ENCODE measurements at regions of chr7 and their contacts with region 1.

Region 1: GRCh38 chr7:16619979-16620408 is 25.6 kb downstream of the ANKMY2 start:
- DNase-seq: no peak
- H3K4me3 Mint-ChIP-seq: peak overlapping the region; percentile 0
- H3K27ac Mint-ChIP-seq: peak overlapping the region; percentile 63
- H3K4me1 Mint-ChIP-seq: peaks cover 10% of the 10 kb centered on the region
- H3K27me3 Mint-ChIP-seq: no peaks in the 10 kb centered on the region

Region 2: GRCh38 chr7:16524338-16524737 is 95.7 kb before region 1 on chr7:
- CTCF ChIA-PET with region 1: no interaction called
- POLR2A ChIA-PET with region 1: no interaction called
- intact Hi-C with region 1: no loop called
- DNase-seq: no peak
- H3K4me3 Mint-ChIP-seq: no peak overlapping the region
- H3K27ac Mint-ChIP-seq: no peak overlapping the region
- H3K4me1 Mint-ChIP-seq: no peaks in the 10 kb centered on the region
- H3K27me3 Mint-ChIP-seq: peaks cover 3% of the 10 kb centered on the region

Region 3: DNA sequence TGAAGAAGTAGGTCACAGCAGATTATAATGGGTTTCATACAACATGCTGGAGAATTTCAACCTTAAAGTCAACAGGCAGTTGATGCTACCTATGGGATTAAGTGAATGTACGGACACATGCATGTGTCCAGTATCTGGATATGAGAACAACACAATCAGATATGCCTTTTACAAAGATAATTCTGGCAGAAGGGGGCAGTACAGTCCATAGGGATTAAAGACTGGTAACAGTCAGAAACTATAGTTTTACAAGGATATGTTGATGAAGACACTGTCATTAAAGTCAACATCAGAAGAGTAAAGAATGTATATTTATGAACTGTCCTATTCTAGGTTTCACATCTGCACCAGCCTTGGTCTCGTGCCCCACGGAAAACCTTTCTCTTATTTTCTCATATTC is 15.9 kb before region 1 on chr7:
- CTCF ChIA-PET with region 1: no interaction called
- POLR2A ChIA-PET with region 1: no interaction called
- intact Hi-C with region 1: no loop called
- DNase-seq: no peak
- H3K4me3 Mint-ChIP-seq: no peak overlapping the region
- H3K27ac Mint-ChIP-seq: no peak overlapping the region
- H3K4me1 Mint-ChIP-seq: no peaks in the 10 kb centered on the region
- H3K27me3 Mint-ChIP-seq: no peaks in the 10 kb centered on the region

Region 4: DNA sequence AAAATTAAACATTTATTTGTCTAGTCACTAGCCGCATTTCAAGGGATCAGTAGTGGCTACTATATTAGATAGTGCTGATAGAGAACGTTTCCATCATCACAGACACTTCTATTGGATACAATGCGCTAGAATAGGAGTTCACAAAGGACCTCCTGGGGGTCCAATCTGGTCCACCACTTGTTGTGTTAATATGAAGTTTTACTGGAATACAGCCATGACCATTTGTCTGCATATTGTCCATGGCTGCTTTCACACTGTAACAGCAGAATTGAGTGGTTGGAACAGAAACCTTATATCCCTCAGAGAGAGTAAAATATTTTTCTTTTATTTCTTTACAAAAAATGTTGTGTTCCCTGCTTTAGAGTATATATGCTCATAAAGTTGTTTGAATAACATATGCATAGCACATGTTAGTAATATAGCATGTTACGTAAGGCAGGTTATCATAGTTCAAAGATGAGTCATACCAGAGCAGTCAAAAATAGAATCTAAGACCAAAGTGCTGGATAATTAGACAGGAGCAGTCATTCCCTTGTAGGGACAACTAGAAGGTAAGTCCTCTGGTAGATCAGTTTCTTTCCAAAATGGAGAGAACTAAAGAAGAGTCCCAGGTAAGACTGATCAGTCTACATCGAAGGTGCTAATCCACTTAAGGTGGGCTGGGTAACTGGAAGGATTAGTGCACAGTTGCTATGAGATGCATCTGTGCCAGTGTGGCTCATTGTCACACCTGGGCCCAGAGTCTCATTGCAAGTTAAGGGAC is 40.9 kb after region 1 on chr7:
- CTCF ChIA-PET with region 1: no interaction called
- POLR2A ChIA-PET with region 1: no interaction called
- intact Hi-C with region 1: loop called (anchors 1 kb)
- DNase-seq: no peak
- H3K4me3 Mint-ChIP-seq: no peak overlapping the region
- H3K27ac Mint-ChIP-seq: no peak overlapping the region
- H3K4me1 Mint-ChIP-seq: peaks cover 19% of the 10 kb centered on the region
- H3K27me3 Mint-ChIP-seq: no peaks in the 10 kb centered on the region

Region 5: DNA sequence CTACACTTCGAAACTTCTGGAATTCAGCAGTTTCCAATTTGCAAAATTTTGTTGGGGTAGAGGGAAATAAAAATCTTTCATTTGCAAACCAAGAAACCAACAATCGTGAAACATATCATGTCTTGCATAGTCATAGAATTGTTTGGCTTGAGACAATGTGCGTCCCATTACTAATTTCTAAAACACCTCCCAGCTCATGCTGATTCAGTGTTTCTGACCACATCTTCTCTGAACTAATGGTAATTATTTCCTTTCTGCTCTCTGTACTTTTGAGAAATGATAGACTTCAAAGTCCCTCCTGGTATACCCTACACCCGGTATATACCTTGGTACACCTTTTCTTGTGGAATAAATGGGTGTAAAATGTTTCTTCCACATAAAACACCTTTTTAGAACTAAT is 91.7 kb after region 1 on chr7:
- CTCF ChIA-PET with region 1: no interaction called
- POLR2A ChIA-PET with region 1: no interaction called
- intact Hi-C with region 1: loop called (anchors 1 kb)
- DNase-seq: no peak
- H3K4me3 Mint-ChIP-seq: no peak overlapping the region
- H3K27ac Mint-ChIP-seq: peak overlapping the region; percentile 53
- H3K4me1 Mint-ChIP-seq: peaks cover 20% of the 10 kb centered on the region
- H3K27me3 Mint-ChIP-seq: no peaks in the 10 kb centered on the region

Measured in activated CD4-positive, alpha-beta memory T cell treated with anti-CD3 and anti-CD28 coated beads for 36 hours (primary cell).